ENCODE measurements at regions of chr2 and their contacts with region 1.

Region 1: GRCh38 chr2:63861220-63861822 is 19.6 kb downstream of the UGP2 start:
- DNase-seq: peak; percentile 73
- H3K4me3 Mint-ChIP-seq: no peak overlapping the region
- H3K27ac Mint-ChIP-seq: no peak overlapping the region
- H3K4me1 Mint-ChIP-seq: peaks cover 44% of the 10 kb centered on the region
- H3K27me3 Mint-ChIP-seq: no peaks in the 10 kb centered on the region

Region 2: GRCh38 chr2:63424329-63425078 is 436.8 kb before region 1 on chr2:
- CTCF ChIA-PET with region 1: no interaction called
- intact Hi-C with region 1: loop called (anchors 10 kb)
- DNase-seq: no peak
- H3K4me3 Mint-ChIP-seq: no peak overlapping the region
- H3K27ac Mint-ChIP-seq: no peak overlapping the region
- H3K4me1 Mint-ChIP-seq: peaks cover 2% of the 10 kb centered on the region
- H3K27me3 Mint-ChIP-seq: no peaks in the 10 kb centered on the region

Region 3: DNA sequence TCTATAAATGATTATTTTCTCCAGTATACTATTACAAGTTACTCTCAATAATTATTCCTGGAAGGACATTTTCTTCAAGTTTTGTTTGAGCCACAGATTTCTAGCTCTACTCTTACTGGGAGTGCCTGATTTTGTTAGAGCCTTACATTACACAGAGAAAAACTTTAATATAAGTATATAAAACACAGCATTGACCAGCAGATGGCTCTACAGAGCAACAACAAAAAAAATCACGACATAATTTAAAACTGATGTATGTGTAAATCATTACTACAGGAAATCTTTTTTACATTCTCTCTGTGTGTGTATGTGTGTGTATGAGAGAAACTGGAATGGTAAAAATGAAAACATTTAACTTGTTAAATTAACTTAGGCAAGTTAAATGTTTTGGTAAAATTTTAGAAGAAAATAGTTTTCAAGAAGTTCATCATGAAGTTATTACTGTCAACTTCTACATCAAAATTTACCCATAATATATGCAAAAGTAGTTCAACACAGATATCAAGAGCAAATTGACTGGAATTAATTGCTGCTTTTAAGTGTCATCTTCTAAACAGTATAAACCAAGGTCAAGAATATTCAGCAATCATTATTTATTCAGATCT is 169.2 kb before region 1 on chr2:
- CTCF ChIA-PET with region 1: interaction called, 33 read pairs
- intact Hi-C with region 1: loop called (anchors 1 kb)
- DNase-seq: peak; percentile 40
- H3K4me3 Mint-ChIP-seq: no peak overlapping the region
- H3K27ac Mint-ChIP-seq: no peak overlapping the region
- H3K4me1 Mint-ChIP-seq: no peaks in the 10 kb centered on the region
- H3K27me3 Mint-ChIP-seq: no peaks in the 10 kb centered on the region

Region 4: GRCh38 chr2:63698825-63699548 is 162.3 kb before region 1 on chr2:
- CTCF ChIA-PET with region 1: interaction called, 33 read pairs
- intact Hi-C with region 1: loop called (anchors 1 kb)
- DNase-seq: peak; percentile 22
- H3K4me3 Mint-ChIP-seq: no peak overlapping the region
- H3K27ac Mint-ChIP-seq: no peak overlapping the region
- H3K4me1 Mint-ChIP-seq: no peaks in the 10 kb centered on the region
- H3K27me3 Mint-ChIP-seq: no peaks in the 10 kb centered on the region

Region 5: DNA sequence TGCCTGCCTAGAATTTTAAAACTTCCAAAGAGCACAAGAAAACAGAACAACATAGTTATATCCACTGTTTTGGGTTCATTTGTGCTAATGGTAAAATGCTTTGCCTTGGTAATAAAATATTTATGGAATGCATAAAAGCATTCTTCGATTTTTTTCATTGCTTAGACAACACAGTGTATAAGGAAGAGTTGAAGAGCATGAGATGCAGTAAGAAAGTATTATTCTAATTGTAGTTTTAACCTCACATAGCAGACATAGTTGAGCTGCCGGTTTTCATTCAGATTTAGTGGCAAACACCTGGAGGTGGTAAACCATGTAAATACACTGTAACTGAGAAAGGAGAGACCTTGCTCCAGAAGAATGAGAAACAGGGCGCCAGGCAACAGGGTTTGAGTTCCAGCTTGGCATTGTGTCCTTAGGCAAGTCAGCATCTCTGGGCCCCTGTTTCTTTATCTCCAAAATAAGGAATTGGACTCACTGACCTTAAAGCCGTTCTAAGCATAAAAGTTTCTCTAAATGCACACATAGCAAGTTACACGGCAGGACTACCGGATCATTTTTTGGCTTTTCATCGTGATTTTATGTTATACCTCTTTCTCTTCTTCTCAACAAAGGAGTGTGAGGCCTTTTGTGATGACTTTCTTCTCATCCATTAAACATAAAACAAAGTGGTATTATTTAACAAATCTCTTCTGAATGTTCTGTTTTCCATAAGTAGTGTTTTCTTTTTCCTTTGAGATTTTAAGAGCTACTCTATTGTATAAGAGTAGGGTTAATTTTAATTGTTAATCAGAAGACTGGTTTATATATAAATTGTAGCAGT is 11.7 kb before region 1 on chr2:
- CTCF ChIA-PET with region 1: interaction called, 20 read pairs
- intact Hi-C with region 1: no loop called
- DNase-seq: no peak
- H3K4me3 Mint-ChIP-seq: no peak overlapping the region
- H3K27ac Mint-ChIP-seq: peak overlapping the region; percentile 66
- H3K4me1 Mint-ChIP-seq: peaks cover 84% of the 10 kb centered on the region
- H3K27me3 Mint-ChIP-seq: no peaks in the 10 kb centered on the region

Region 6: GRCh38 chr2:64018923-64019718 is 157.8 kb after region 1 on chr2 and contains the start of gene VPS54:
- CTCF ChIA-PET with region 1: no interaction called
- intact Hi-C with region 1: loop called (anchors 5 kb)
- DNase-seq: peak; percentile 52
- H3K4me3 Mint-ChIP-seq: peak within 1 kb of the TSS; percentile 95
- H3K27ac Mint-ChIP-seq: peak within 1 kb of the TSS; percentile 95
- H3K4me1 Mint-ChIP-seq: peaks cover 34% of the 10 kb centered on the region
- H3K27me3 Mint-ChIP-seq: no peaks in the 10 kb centered on the region
- total RNA-seq, gene VPS54: 7.0 to 7.7 TPM

Region 7: DNA sequence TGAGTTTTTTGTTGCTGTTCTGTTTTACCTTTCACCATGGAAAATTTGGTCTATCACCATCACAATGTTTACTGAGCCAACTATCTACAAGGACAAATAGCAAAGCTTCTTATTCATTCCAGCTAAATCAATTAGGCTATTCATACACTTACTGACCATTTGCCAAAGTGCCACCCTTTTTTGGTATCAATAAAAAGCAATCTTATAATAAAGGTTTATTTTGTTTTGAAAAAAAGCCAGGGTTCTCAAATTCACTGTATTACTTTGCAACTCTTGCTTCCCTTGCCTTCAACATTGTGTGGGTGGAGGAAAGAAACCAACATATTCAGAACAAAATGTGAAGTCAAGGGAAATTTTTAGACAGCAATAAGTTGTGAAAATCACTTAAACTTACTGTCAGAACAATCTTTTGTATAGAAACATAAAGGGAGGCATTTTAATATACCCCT is 267.6 kb after region 1 on chr2:
- CTCF ChIA-PET with region 1: no interaction called
- intact Hi-C with region 1: no loop called
- DNase-seq: peak; percentile 22
- H3K4me3 Mint-ChIP-seq: no peak overlapping the region
- H3K27ac Mint-ChIP-seq: peak overlapping the region; percentile 65
- H3K4me1 Mint-ChIP-seq: peaks cover 82% of the 10 kb centered on the region
- H3K27me3 Mint-ChIP-seq: no peaks in the 10 kb centered on the region

Region 8: DNA sequence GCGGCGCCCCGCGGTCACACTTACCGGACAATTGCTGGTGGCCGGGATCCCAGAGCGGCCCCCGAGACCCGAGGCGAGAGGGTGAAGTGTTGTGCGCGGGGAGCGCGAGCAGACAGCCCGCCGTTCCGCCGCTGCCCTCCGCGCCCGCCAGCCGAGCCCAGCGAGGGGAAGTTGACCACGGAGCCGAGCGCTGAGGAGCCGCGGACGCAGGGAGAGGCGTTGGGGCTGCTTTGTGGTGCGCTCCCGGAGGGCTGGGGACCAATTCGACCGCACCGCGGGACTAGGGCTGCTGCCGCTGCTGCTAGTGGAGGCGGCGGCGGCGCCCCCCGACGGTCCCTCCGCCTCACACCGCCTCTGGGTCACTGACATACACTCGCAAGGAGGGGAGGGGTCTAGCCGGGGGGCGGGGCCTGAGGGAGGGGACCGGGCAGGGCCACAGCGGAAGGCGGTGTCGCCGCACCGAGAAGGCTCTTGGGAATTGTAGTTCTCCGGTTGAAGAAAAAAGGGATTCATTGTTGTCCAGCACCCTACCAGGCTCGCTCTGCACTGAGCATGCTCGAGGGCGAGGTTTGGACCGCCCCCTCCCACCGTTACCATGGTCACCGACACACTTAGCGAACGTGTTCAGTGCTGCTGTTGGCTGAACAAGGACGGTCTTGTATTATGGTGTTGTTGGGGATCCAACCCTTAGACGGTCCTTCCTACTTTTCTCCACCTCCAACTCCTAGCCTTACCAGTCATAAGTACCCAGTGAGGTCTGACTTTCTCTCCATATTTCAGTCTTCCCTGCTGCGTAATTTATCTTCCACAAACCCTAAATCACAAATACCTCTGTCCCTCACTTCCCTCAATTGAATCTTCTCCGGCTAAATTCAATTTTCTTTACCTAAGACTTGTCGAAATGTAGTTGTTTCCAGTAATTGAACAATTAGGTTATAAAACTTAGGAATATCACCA is 283.0 kb after region 1 on chr2 and contains the start of gene PELI1:
- CTCF ChIA-PET with region 1: no interaction called
- intact Hi-C with region 1: no loop called
- DNase-seq: peak; percentile 98
- H3K4me3 Mint-ChIP-seq: peak within 1 kb of the TSS; percentile 94
- H3K27ac Mint-ChIP-seq: peak within 1 kb of the TSS; percentile 94
- H3K4me1 Mint-ChIP-seq: peaks cover 31% of the 10 kb centered on the region
- H3K27me3 Mint-ChIP-seq: no peaks in the 10 kb centered on the region
- total RNA-seq, gene PELI1: 25.7 to 28.0 TPM

Region 9: DNA sequence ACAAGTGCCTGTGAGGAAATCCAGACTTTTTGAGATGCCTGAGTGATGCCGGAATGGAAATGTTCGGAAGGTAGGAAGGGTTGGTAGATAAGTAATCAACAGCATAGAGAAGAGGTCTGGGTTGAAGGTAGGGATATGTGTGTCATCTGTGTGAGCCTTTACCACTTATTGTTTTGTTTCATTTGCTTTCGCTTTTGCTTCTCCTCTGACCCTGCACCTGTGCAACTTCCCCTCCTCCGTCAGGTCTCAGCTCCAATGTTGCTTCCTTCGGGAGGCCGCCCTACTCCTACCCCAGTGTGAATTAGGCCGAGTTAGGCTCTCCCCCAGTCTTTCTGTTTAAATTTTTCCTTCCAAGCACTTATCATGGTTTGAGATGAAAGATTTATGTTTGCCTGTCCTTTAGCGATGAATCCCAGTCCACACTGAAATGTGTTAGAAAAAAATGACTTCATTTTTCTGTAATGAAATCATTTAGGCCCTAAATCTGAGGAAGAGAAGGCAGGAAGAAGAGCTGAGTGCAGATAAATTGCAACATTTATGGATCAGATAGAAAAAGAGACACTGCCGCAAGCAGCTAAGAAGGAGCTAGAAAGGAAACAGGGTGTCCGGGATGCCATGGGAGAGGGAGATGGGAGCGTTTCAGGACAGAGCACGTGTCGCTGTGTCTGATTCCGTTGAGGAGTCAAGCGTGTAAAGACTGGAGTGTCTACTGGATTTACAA is 422.5 kb after region 1 on chr2:
- CTCF ChIA-PET with region 1: no interaction called
- intact Hi-C with region 1: no loop called
- DNase-seq: peak; percentile 42
- H3K4me3 Mint-ChIP-seq: no peak overlapping the region
- H3K27ac Mint-ChIP-seq: no peak overlapping the region
- H3K4me1 Mint-ChIP-seq: no peaks in the 10 kb centered on the region
- H3K27me3 Mint-ChIP-seq: no peaks in the 10 kb centered on the region

Region 10: DNA sequence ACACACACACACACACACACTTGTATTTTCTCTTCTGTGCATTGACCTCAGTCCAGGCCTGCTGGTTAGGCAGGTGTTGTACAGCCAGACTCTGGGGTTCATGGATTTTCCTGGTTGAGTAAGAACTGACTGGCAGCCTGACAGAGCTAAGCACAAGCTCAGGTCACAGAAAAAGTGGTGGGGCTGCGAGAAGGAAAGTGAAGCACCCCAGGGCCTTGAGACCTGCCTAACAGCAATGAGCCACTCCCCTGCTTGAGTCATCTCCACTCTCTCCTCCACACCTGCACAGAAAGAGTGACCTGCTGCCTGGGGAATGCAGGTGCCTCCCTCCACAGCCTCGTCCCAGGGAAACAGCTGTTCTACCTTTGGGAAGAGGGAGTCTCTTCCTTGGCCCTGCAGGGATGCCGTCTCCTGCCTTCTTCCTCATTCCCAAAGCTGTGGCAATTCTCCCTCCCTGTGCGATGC is 501.3 kb after region 1 on chr2:
- CTCF ChIA-PET with region 1: no interaction called
- intact Hi-C with region 1: no loop called
- DNase-seq: no peak
- H3K4me3 Mint-ChIP-seq: no peak overlapping the region
- H3K27ac Mint-ChIP-seq: no peak overlapping the region
- H3K4me1 Mint-ChIP-seq: peaks cover 5% of the 10 kb centered on the region
- H3K27me3 Mint-ChIP-seq: peaks cover 2% of the 10 kb centered on the region